PC-3 (cell line): ENCODE measurements at regions of chr20 and their contacts with region 1.

Region 1: DNA sequence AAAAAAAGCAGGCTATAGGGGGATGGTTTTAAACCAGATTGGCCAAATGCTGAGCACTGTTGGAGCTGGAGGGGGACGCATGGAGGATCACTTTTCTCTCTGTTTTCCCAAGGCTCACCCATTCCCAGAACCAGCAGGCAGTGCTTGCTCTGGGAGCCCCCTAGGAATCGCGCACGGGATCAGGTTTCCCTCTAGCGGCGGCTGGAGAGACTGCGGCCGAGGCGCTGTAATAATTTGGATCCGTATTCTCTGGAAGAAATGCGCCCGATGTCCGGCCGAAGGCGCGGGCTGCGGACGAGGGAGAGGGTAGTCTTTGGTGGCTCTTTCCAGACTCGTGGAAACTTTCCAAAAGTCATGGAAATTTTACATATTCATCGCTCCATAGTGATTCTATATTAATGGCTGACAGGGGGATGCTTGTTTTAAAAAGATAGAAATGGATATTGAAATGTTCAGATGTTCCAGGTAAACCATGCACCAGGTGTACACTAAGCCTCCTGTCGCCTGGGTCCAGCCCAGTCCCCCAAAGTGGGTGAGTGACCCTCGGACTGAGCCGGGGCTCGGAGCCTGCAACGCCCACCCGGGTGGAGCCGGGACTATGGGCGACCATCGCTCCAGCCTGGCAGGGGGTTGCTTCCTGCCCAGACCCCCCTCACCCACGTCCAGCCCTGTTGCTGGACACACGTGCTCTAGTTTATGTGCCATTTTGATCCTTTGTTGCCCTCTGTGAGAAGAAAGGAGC is 78.7 kb upstream of the PHACTR3 start:
- DNase-seq: peak; percentile 70
- ATAC-seq: peak; percentile 80
- H3K4me3 ChIP-seq: no peak overlapping the region
- H3K27ac ChIP-seq: no peak overlapping the region
- H3K4me1 ChIP-seq: no peaks in the 10 kb centered on the region
- H3K27me3 ChIP-seq: peaks cover 57% of the 10 kb centered on the region
- CTCF ChIP-seq: peak; percentile 86

Region 2: DNA sequence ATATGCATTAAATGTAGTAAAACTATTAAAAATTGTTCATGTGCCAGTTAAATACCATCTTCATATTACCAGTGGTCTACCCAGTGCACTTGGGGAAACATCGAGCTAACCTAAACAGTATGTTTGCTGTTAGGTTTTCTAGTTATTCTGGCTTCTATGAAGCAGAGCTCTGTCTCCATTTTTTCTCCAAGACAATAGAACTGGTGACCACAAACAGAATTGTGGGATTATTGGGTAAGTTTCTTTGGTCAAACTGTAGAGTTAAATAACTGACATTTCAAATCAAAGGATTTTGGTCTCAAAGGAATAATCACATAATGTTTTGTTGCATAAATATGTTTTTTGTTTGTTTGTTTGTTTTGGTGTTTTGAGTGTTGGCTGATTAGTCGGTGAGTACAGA is 265.7 kb before region 1 on chr20:
- CTCF ChIA-PET with region 1: no interaction called
- POLR2A ChIA-PET with region 1: no interaction called
- intact Hi-C with region 1: no loop called
- DNase-seq: no peak
- ATAC-seq: no peak
- H3K4me3 ChIP-seq: no peak overlapping the region
- H3K27ac ChIP-seq: no peak overlapping the region
- H3K4me1 ChIP-seq: no peaks in the 10 kb centered on the region
- H3K27me3 ChIP-seq: peaks cover 93% of the 10 kb centered on the region
- CTCF ChIP-seq: no peak

Region 3: DNA sequence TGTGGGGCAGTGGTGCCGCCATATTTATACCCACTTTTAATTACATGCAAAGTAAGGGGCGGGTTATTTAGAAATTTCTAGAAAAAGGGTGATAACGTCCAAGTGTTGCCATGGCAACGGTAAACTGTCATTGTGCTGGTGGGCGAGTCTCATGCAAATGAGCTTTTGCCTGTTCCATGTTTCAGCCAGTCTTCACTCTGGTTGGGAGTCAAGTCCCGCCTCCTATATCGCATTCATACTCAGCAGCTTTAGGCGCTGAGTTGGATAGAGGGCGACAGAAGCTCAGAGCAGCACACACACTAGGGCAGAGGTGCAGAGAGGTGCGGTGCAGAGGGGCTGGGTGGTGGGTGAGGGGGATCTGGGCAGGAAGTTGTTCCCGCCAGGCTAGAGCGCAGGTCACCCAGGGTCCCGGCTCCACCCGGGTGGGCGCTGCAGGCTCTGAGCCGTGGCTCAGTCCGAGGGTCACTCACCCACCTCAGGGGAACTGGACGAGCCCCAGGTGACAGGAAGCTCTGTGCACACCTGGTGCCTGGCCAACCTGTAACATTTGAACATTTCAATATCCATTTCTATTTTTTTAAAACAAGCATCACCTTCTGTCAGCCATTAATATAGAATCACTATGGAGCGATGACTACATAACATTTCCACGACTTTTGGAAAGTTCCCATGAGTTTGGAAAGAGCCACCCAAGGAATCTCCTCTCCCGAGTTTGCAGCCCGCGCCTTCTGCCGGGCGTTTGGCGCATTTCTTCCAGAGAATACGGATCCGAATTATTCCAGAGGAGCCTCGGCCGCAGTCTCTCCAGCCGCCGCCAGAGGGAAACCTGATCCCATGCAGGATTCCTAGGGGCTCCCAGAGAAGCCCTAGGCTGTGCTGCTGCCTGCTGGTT is 10.4 kb before region 1 on chr20:
- CTCF ChIA-PET with region 1: no interaction called
- POLR2A ChIA-PET with region 1: no interaction called
- intact Hi-C with region 1: loop called (anchors 1 kb)
- DNase-seq: peak; percentile 78
- ATAC-seq: peak; percentile 94
- H3K4me3 ChIP-seq: no peak overlapping the region
- H3K27ac ChIP-seq: no peak overlapping the region
- H3K4me1 ChIP-seq: no peaks in the 10 kb centered on the region
- H3K27me3 ChIP-seq: peaks cover 35% of the 10 kb centered on the region
- CTCF ChIP-seq: peak; percentile 80